Activated CD8-positive, alpha-beta T cell treated with anti-CD3 and anti-CD28 coated beads, Interleukin-2, amount 10 ng/mL, durations not matched to agents 7 days and 5 days (primary cell): ENCODE measurements at regions of chr6 and their contacts with region 1.

Region 1: DNA sequence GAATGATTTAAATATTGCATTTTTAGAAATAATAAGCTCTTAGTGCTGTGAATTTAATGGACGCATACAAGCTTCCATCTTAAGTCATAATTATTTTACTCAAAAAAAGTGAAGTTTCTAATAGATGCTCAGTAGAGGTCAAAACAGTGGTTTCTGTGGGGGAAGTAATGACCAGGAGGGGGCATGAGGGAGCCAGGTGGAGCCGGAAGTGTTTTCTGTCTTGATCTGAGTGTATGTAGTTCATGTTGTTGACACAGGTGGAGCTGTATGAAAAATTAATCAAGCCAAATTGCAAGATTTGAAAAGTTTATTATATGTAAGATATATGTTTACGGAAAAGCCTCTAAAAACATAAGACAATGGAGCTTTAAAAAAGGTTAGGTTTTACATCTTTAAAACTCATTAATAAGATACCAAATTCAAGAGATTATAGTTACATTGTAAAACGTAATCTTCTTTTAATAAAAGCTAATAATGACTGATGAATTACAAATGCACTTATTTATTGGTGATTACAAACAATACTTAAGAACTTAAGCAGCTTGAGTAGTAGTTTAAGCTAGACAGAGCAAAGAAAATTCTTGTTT is 68.0 kb downstream of the PLAGL1 start:
- DNase-seq: peak; percentile 77
- ATAC-seq: peak; percentile 87
- H3K4me3 Mint-ChIP-seq: no peak overlapping the region
- H3K27ac Mint-ChIP-seq: no peak overlapping the region
- H3K4me1 Mint-ChIP-seq: peaks cover 15% of the 10 kb centered on the region
- H3K27me3 Mint-ChIP-seq: peaks cover 5% of the 10 kb centered on the region

Region 2: GRCh38 chr6:143842902-143843676 is 97.0 kb before region 1 on chr6 and contains the start of gene LTV1:
- CTCF ChIA-PET with region 1: interaction called, 18 read pairs
- POLR2A ChIA-PET with region 1: no interaction called
- DNase-seq: peak; percentile 96
- ATAC-seq: peak; percentile 97
- H3K4me3 Mint-ChIP-seq: peak within 1 kb of the TSS; percentile 95
- H3K27ac Mint-ChIP-seq: peak within 1 kb of the TSS; percentile 97
- H3K4me1 Mint-ChIP-seq: peaks cover 16% of the 10 kb centered on the region
- H3K27me3 Mint-ChIP-seq: no peaks in the 10 kb centered on the region
- total RNA-seq, gene LTV1: 25.5 to 26.8 TPM

Region 3: DNA sequence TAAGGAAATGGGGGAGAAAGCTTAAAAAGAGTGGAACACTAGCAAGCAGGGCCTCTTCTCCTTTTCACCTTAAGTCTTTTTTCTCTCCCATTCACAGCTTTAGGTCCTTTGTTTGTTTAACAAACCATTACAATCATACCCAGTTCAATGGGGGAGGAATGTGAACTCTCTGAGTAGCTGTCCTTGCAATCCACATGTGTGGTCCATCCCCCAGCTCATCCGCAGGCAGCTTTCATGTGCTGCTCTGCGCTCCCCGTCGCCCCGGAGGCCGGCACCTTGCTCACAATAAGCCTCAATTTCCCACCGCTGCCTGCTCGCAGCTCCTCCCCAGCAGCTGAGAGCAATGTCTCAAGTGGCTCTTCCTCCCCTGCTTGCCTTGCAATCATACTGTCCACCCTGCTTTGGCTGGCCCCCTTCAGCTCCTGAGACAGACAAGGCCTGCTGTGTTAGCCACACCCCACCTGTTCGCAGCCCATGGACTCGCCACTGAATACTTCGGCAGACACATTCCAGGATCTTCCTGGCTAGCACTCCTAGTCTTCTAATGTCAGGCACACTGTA is 18.8 kb after region 1 on chr6:
- CTCF ChIA-PET with region 1: interaction called, 25 read pairs
- POLR2A ChIA-PET with region 1: no interaction called
- DNase-seq: no peak
- ATAC-seq: no peak
- H3K4me3 Mint-ChIP-seq: no peak overlapping the region
- H3K27ac Mint-ChIP-seq: no peak overlapping the region
- H3K4me1 Mint-ChIP-seq: no peaks in the 10 kb centered on the region
- H3K27me3 Mint-ChIP-seq: no peaks in the 10 kb centered on the region

Region 4: GRCh38 chr6:144013486-144013909 is 73.4 kb after region 1 on chr6:
- CTCF ChIA-PET with region 1: interaction called, 161 read pairs
- POLR2A ChIA-PET with region 1: interaction called, 4 read pairs
- DNase-seq: peak; percentile 67
- ATAC-seq: no peak
- H3K4me3 Mint-ChIP-seq: no peak overlapping the region
- H3K27ac Mint-ChIP-seq: no peak overlapping the region
- H3K4me1 Mint-ChIP-seq: peaks cover 5% of the 10 kb centered on the region
- H3K27me3 Mint-ChIP-seq: peaks cover 15% of the 10 kb centered on the region

Region 5: GRCh38 chr6:144055121-144055931 is 115.2 kb after region 1 on chr6:
- CTCF ChIA-PET with region 1: interaction called, 15 read pairs
- POLR2A ChIA-PET with region 1: interaction called, 4 read pairs
- DNase-seq: peak; percentile 78
- ATAC-seq: peak; percentile 95
- H3K4me3 Mint-ChIP-seq: peak overlapping the region; percentile 84
- H3K27ac Mint-ChIP-seq: peak overlapping the region; percentile 98
- H3K4me1 Mint-ChIP-seq: peaks cover 36% of the 10 kb centered on the region
- H3K27me3 Mint-ChIP-seq: no peaks in the 10 kb centered on the region

Region 6: DNA sequence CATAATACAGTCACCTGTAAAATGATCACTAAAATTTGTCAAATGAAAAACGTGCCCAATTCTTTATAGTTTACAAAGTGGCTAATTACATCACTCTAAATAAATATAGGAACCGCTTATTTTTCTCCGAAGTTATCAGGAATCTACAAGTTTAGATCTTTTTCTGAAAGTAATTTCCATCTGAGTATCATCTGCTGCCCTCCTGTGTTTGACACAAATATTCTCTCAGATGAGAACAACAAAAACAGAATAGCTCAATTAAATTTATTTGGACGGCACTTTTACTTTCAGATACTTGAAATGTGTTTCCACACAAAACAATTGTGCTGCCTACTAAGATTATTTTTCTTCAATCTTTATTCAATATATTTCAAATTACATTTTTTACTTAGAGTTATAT is 150.3 kb after region 1 on chr6:
- CTCF ChIA-PET with region 1: interaction called, 14 read pairs
- POLR2A ChIA-PET with region 1: interaction called, 4 read pairs
- DNase-seq: no peak
- ATAC-seq: no peak
- H3K4me3 Mint-ChIP-seq: no peak overlapping the region
- H3K27ac Mint-ChIP-seq: no peak overlapping the region
- H3K4me1 Mint-ChIP-seq: peaks cover 27% of the 10 kb centered on the region
- H3K27me3 Mint-ChIP-seq: no peaks in the 10 kb centered on the region

Region 7: DNA sequence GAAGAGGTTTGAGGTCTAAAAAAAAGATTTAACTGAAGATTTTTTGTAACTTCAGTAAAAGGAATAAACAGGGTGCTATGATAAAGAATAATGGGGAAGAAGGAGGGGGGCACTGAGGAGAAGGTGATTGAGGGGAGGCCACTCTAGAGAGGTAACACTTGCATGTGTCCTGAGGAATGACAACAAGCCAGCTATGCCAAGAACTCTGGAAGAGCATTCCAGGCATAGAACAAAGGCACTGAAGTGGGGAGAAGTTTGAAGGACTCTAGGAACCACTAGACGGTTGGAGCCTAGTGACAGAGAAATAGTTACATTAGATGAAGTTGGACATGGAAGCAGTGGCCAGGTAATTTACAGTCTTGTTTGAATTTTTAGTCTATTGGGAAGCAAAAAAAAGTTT is 166.1 kb after region 1 on chr6:
- CTCF ChIA-PET with region 1: no interaction called
- POLR2A ChIA-PET with region 1: no interaction called
- DNase-seq: no peak
- ATAC-seq: no peak
- H3K4me3 Mint-ChIP-seq: no peak overlapping the region
- H3K27ac Mint-ChIP-seq: no peak overlapping the region
- H3K4me1 Mint-ChIP-seq: peaks cover 4% of the 10 kb centered on the region
- H3K27me3 Mint-ChIP-seq: peaks cover 2% of the 10 kb centered on the region